Endothelial cell of umbilical vein (primary cell): ENCODE measurements at regions of chr2 and their contacts with region 1.

Region 1: DNA sequence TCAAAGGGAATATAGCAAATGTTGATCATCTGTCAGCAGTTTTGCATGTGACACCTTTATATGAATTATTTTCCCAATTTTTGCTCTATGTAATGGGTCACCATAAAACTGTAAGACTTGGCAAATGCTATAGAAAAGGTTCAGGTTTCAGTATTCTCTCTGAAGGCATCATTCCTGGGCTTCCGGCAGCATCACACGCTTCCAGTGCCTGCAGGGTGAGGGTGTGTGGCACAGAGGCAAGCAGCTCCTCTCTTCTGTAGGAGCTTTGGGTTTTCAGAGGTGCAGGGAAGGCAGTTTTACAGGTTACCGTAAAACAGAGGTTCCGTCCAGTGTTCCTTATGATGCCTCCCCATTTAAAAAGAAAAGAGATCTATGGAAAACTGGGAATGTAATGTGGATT is 18.8 kb downstream of the COA5 start:
- DNase-seq: no peak
- H3K4me3 ChIP-seq: no peak overlapping the region
- H3K27ac ChIP-seq: no peak overlapping the region
- H3K4me1 ChIP-seq: no peaks in the 10 kb centered on the region
- H3K27me3 ChIP-seq: no peaks in the 10 kb centered on the region
- CTCF ChIP-seq: no peak
- POLR2A ChIP-seq: no peak

Region 2: DNA sequence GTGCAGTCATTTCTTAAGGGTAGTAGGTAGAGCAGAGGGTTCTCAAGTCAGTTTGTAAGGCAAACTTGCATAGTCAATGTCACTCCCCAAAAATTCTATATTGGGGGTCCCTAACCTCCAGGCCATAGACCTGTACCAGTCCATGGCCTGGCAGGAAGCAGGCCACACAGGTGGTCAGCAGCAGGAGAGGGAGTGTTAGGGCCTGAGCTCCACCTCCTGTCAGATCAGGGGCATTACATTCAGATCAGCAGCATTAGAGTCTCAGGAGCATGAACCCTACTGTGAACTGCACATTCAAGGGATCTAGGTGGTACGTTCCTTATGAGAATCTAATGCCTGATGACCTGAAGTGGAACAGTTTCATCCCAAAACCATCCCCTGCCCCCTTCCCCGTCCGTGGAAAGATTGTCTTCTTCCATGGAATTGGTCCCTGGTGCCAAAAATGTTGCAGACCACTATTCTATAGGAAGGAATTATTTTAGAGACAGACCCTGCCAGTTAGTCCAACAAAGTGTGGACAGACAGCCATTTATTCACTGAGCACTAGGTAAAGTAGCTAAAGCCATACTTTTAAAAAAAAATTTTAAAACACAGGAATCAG is 12.1 kb after region 1 on chr2:
- CTCF ChIA-PET with region 1: interaction called, 15 read pairs
- POLR2A ChIA-PET with region 1: no interaction called
- dilution Hi-C with region 1: no loop called
- intact Hi-C with region 1: no loop called
- DNase-seq: peak; percentile 48
- H3K4me3 ChIP-seq: no peak overlapping the region
- H3K27ac ChIP-seq: no peak overlapping the region
- H3K4me1 ChIP-seq: peaks cover 6% of the 10 kb centered on the region
- H3K27me3 ChIP-seq: no peaks in the 10 kb centered on the region
- CTCF ChIP-seq: peak; percentile 53 to 70
- POLR2A ChIP-seq: no peak